ENCODE measurements at regions of chr1 and their contacts with region 1.

Region 1: DNA sequence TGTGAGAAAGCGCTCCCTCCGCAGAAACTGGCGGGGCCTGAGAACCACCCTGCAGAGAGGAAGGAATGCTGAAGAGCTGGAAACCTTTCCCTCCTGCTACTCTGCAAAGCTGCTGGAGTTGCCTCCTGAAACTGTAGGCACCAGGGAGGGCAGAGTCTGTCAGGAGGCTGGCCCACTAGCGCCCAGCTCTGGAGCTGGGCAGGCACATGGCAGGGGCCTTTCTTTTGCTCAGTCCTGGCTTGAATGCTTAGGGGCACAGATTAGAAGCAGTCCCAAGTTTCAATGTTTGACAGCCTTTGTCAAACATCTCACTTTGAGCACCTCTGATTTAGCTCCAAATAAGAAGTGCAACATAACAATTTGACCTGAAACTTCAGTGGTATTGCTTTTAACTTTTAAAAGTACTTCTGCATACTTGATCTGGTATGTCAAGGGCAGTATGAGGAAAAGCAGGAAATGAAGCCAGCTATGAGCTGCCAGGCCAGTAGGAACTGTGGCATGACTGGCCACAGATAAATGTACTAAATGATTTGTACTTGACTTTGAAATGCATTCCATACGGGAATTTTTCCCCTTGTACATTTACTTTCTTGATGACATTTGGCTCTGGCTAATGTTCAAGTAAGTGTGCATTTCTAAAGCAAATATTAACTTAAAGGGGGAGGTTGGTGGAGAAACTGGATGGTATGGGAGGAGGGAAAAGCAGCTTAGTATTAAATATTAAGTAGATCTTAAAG is 7.2 kb downstream of the C1orf116 start:
- DNase-seq: no peak
- H3K4me3 ChIP-seq: no peak overlapping the region
- H3K27me3 ChIP-seq: no peaks in the 10 kb centered on the region
- CTCF ChIP-seq: no peak

Region 2: DNA sequence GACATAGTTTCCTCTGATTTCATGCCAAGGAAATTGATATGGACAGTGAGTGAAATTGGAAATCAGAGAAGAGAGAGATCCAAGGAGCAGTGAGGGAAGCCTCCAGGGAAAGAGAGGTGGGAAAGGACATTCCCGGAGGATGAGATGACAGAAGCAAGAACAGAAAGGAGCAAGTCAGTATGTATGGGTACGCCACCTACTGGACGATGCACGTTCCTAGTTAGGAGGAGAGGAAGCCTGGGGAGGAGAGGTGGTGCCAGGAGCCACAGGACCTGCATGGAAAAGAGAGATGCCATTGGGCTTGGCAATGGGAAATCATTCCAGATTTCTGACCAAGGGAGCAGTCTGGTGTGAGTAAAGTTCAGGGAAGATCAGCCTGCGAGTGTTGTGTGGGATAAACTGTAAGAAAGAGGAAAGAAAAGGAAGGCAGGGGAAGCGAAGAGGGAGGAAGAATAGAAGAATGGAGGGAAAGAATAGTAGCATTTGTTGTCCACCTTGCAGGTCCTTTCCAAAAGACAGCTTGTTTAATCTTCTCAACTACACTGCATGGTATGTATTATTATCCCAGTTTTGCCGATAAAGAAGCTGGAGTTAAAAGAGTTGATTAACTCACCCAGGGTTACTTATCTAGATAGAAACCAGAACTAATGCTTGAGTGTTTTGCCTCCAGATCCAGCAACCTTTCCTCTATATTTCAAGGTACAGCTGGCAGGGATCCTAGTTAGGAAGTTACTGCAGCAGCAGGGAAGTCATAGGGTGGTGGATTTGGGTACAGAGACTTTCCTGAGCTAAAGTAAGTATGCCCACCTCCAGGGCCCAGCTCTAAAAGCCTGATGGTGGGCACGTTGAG is 20.1 kb before region 1 on chr1:
- CTCF ChIA-PET with region 1: interaction called, 10 read pairs
- POLR2A ChIA-PET with region 1: no interaction called
- DNase-seq: no peak
- H3K4me3 ChIP-seq: no peak overlapping the region
- H3K27me3 ChIP-seq: no peaks in the 10 kb centered on the region
- CTCF ChIP-seq: peak; percentile 78